ENCODE measurements at regions of chr1 and their contacts with region 1.

Region 1: GRCh38 chr1:200971955-200972711 is 51.4 kb downstream of the KIF21B start:
- DNase-seq: peak; percentile 54
- H3K4me3 ChIP-seq: no peak overlapping the region
- H3K27ac ChIP-seq: no peak overlapping the region
- H3K4me1 ChIP-seq: no peaks in the 10 kb centered on the region
- CTCF ChIP-seq: peak; percentile 84

Region 2: GRCh38 chr1:200929530-200930278 is 42.4 kb before region 1 on chr1:
- CTCF ChIA-PET with region 1: no interaction called
- POLR2A ChIA-PET with region 1: no interaction called
- intact Hi-C with region 1: no loop called
- DNase-seq: no peak
- H3K4me3 ChIP-seq: no peak overlapping the region
- H3K27ac ChIP-seq: no peak overlapping the region
- H3K4me1 ChIP-seq: no peaks in the 10 kb centered on the region
- CTCF ChIP-seq: no peak

Region 3: DNA sequence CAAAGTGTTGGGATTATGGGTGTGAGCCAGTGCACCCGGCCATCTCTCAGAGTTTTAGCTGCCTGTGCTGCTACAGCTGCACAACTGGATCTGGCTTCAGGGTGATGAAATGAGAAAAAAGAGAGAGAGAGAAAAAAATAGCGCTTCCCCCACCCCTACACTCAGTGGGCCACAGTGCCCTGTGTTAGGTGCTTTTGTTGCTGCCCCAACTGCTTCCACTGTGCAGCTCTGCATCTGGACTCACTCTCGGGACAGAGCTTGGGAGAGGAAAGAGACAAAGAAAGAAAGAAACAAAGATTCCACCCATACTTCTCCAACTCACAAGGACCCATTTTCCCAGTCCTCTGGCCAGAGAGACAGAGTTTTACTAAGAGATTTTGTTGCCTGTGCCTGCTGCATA is 27.0 kb before region 1 on chr1:
- CTCF ChIA-PET with region 1: no interaction called
- POLR2A ChIA-PET with region 1: no interaction called
- intact Hi-C with region 1: no loop called
- DNase-seq: no peak
- H3K4me3 ChIP-seq: no peak overlapping the region
- H3K27ac ChIP-seq: no peak overlapping the region
- H3K4me1 ChIP-seq: no peaks in the 10 kb centered on the region
- CTCF ChIP-seq: no peak

Region 4: GRCh38 chr1:201023517-201023902 is 51.4 kb after region 1 on chr1 and contains the start of gene KIF21B:
- CTCF ChIA-PET with region 1: interaction called, 12 read pairs
- POLR2A ChIA-PET with region 1: interaction called, 3 read pairs
- intact Hi-C with region 1: no loop called
- DNase-seq: peak; percentile 92
- H3K4me3 ChIP-seq: peak within 1 kb of the TSS; percentile 80
- H3K27ac ChIP-seq: peak within 1 kb of the TSS; percentile 97
- H3K4me1 ChIP-seq: peaks cover 83% of the 10 kb centered on the region
- CTCF ChIP-seq: no peak
- total RNA-seq, gene KIF21B: 25.0 and 30.5 TPM in 2 replicates

Region 5: DNA sequence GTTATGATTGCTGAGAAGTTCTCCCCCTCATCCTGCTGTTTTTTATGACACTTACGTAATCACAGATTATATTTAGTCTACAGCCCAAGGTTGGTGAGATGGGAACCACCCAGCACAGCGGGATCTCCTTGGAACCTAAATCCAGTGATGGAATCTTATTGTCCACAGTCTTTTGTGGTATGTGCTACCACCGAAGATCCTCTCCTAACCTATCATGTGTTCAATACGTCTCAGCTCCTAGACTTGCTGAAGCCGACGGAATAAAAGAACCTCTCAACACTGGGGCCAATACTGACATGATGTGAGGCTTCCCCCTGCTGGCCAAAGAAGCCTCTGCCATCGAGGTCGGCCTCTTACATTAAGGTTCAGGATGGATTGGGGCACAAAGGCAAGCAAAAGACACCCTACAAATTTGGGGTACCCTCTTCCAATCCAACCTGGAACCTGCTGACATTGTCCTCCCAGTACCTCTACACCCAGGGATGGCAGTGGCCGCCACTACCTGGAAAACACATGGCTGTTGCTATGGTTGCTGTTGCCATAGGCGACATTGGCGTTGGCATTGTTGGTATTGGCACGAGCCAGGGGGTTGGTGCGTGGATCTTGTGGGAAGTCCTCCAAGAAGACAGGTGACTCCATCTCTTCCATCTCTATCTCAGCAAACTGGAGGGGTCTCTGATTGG is 70.8 kb after region 1 on chr1:
- CTCF ChIA-PET with region 1: interaction called, 6 read pairs
- POLR2A ChIA-PET with region 1: no interaction called
- intact Hi-C with region 1: loop called (anchors 1 kb)
- DNase-seq: peak; percentile 73
- H3K4me3 ChIP-seq: no peak overlapping the region
- H3K27ac ChIP-seq: no peak overlapping the region
- H3K4me1 ChIP-seq: no peaks in the 10 kb centered on the region
- CTCF ChIP-seq: peak; percentile 96

Region 6: DNA sequence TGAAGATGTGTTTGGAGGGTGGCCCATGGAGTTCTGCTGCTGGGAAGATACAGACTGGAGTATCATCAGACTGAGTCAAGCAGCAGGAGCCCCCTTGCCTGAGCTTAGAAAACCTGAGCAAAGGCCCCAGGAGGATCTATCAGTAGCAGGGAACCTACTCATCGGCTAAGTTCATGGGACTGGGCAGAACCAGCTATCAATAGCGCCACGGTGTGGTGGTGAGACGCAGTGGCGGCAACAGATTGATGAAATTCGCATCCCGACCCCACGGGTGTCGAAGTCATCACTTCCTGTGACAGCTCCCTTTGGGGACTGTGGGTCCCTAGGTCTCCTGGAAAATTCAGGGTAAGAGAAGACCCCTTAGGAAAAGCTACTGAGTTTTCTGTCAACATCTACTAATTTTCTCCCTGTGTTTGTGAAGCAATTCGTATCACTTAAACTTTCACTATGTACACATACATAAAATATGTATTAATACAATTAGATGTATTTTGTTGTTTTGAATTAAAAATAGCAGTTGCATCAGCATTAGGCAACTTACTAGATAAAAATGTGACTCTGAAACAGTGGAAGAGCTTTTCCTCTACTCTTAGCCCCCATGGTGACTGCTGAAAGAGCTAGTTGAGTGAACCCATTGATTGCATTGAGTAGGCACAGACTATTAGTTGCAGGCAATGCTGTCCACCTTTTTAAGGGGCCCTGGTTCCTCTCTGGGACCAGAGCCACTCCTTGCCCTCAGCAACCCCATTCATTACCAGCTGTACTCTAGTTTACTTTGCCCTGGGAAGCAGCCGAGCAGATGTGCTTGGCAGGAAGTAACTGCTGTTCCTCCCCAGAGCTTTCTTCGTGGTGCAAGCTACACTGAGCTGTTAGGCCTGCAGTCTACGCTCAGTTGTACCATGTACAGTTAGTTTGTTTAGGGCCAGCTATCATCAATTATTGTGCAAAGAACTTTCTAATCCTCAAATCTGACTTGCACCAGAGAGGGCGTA is 147.4 kb after region 1 on chr1:
- CTCF ChIA-PET with region 1: interaction called, 3 read pairs
- POLR2A ChIA-PET with region 1: interaction called, 3 read pairs
- intact Hi-C with region 1: loop called (anchors 2 kb)
- DNase-seq: peak; percentile 67
- H3K4me3 ChIP-seq: no peak overlapping the region
- H3K27ac ChIP-seq: no peak overlapping the region
- H3K4me1 ChIP-seq: peaks cover 11% of the 10 kb centered on the region
- CTCF ChIP-seq: peak; percentile 92

Measured in OCI-LY7 (cell line).